Activated T-helper 1 cell treated with anti-CD3 and anti-CD28 coated beads, Interleukin-12 subunit alpha, Interleukin-12 subunit beta, Interleukin-2, Interleukin-4 antibody, amounts not matched to agents 30 ng/mL and 10 ng/mL and 1 ng/mL, durations not matched to agents 14 hours and 24 hours and 36 hours (primary cell): ENCODE measurements at regions of chr3 and their contacts with region 1.

Region 1: GRCh38 chr3:171829841-171830517 is 13.2 kb upstream of the TMEM212 start:
- DNase-seq: no peak
- H3K4me3 Mint-ChIP-seq: no peak overlapping the region
- H3K27ac Mint-ChIP-seq: no peak overlapping the region
- H3K4me1 Mint-ChIP-seq: peaks cover 5% of the 10 kb centered on the region
- H3K27me3 Mint-ChIP-seq: peaks cover 20% of the 10 kb centered on the region

Region 2: DNA sequence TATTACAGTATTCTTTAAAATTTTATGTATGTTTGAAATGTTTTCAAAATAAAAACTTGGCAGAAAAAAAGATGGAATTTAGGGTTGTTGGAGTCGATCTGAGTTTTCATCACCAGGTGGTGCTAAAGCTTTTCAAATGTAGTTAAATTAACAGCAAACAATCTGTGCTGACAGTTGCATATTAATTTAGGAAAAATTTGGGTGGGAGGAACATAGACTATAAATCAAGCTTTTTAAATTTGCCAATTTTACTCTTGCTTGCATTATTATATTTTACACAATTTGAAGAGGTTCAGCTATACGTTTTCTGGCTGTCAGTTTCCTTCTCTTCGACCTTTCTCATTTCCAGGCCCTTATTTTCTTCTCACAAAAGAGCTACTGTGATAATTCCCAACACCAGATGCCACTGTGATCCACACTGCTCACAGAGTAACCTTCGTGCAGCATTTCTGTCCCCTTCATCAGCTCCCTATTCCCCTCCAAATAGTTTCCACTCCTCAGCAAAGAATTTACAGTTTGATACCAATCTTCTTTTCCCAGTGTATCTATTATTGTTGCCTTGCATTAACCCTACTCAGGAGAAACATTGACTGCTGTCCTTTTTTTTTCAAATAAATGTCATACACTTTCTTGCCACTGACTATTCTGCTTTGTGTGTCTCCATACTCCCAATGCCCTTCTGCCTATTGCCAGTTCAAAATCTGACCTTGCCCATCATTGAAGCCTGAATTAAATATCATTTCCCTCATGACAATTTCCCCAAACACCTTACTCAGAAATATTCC is 868.2 kb before region 1 on chr3:
- intact Hi-C with region 1: loop called (anchors 5 kb)
- DNase-seq: no peak
- H3K4me3 Mint-ChIP-seq: no peak overlapping the region
- H3K27ac Mint-ChIP-seq: no peak overlapping the region
- H3K4me1 Mint-ChIP-seq: no peaks in the 10 kb centered on the region
- H3K27me3 Mint-ChIP-seq: peaks cover 13% of the 10 kb centered on the region

Region 3: GRCh38 chr3:171646357-171647133 is 183.4 kb before region 1 on chr3:
- intact Hi-C with region 1: loop called (anchors 10 kb)
- DNase-seq: no peak
- H3K4me3 Mint-ChIP-seq: no peak overlapping the region
- H3K27ac Mint-ChIP-seq: no peak overlapping the region
- H3K4me1 Mint-ChIP-seq: no peaks in the 10 kb centered on the region
- H3K27me3 Mint-ChIP-seq: peaks cover 2% of the 10 kb centered on the region

Region 4: GRCh38 chr3:171703756-171704401 is 126.1 kb before region 1 on chr3:
- intact Hi-C with region 1: loop called (anchors 5 kb)
- DNase-seq: no peak
- H3K4me3 Mint-ChIP-seq: no peak overlapping the region
- H3K27ac Mint-ChIP-seq: no peak overlapping the region
- H3K4me1 Mint-ChIP-seq: no peaks in the 10 kb centered on the region
- H3K27me3 Mint-ChIP-seq: peaks cover 14% of the 10 kb centered on the region

Region 5: DNA sequence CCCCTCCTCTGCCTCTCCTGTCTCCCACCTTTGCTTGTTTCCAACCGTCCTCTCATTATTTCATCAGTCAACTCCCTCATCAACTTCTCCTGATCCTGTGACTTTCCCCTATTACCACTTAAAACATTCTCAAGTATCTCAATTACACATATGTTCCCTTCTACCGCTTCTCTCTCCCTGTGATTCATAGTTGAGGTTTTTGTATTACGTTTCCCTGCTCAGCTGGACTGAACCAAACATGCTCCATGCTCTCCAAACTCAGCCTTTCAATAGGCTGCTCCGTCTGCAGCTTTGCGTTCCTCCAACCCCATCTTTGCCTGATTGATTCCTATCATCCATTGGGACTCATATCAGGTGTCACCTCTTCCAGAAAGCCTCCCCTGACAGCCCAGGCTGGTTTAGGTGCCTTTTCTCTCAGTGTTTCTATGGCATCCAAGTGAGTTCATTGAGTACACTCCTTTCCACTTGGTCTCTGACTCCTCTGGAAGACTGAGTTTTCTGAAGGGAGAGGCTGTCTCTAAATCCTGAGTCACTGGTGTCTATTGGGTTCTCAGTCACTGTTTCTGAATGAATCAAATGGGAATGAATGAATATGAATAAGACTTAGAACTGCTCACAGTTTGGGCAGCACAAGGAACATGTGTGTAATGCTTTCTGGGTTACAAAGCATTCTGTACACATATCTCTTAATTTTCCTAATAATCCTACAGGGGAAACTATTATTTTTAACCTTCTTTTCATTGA is 76.1 kb before region 1 on chr3:
- intact Hi-C with region 1: no loop called
- DNase-seq: no peak
- H3K4me3 Mint-ChIP-seq: no peak overlapping the region
- H3K27ac Mint-ChIP-seq: no peak overlapping the region
- H3K4me1 Mint-ChIP-seq: no peaks in the 10 kb centered on the region
- H3K27me3 Mint-ChIP-seq: peaks cover 9% of the 10 kb centered on the region

Region 6: DNA sequence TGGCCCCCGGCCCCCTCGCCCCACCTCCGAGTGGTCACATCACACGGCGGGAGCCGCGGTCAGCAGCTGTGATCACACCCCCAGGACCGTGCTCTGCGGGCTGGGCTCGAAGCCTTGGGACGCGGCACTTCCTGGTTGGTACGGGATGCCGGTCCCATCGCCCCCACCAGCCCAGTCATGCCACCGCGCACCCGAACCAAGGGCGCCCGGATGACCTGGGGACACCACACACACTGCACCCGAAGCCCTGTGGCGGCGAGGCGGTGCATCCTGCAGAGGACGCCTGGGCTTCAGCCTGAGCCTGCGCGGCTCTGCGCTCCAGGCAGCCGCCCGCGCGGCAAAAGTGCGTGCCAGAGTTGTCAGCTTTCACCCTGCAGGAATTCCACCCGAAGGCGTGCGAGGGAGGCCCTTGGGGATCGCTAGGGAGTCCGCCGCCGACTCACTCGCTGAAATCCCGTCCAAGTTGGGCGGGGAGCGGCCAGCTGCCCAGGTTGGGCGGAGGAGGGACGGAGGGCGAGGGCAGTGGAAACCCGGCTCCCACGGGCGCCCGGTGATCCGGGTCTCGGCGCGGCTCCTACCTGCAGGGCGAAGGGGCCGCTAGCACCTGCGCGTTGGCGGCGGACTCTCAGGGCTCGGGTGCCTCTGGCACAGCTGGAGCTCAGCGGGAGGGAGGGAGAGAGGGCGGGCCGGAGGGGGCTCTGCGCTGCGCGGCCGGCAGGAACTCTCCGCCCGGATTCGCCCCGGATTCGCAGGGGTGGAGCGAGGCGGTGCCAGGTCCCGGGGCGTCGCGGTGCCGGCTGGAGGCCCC is 20.0 kb before region 1 on chr3 and contains the start of gene PLD1:
- intact Hi-C with region 1: no loop called
- DNase-seq: peak; percentile 27
- H3K4me3 Mint-ChIP-seq: peak within 1 kb of the TSS; percentile 83
- H3K27ac Mint-ChIP-seq: no peak within 1 kb of the TSS
- H3K4me1 Mint-ChIP-seq: peaks cover 22% of the 10 kb centered on the region
- H3K27me3 Mint-ChIP-seq: peaks cover 53% of the 10 kb centered on the region
- total RNA-seq, gene PLD1: 0.15 and 0.29 TPM in 2 replicates